ENCODE measurements at regions of chr9 and their contacts with region 1.

Region 1: GRCh38 chr9:75624998-75625397 is 265.5 kb upstream of the PCSK5 start:
- DNase-seq: peak; percentile 28
- H3K4me3 ChIP-seq: no peak overlapping the region
- H3K27ac ChIP-seq: no peak overlapping the region
- H3K4me1 ChIP-seq: no peaks in the 10 kb centered on the region
- H3K27me3 ChIP-seq: no peaks in the 10 kb centered on the region
- CTCF ChIP-seq: no peak
- EP300 ChIP-seq: no peak
- POLR2A ChIP-seq: no peak

Region 2: DNA sequence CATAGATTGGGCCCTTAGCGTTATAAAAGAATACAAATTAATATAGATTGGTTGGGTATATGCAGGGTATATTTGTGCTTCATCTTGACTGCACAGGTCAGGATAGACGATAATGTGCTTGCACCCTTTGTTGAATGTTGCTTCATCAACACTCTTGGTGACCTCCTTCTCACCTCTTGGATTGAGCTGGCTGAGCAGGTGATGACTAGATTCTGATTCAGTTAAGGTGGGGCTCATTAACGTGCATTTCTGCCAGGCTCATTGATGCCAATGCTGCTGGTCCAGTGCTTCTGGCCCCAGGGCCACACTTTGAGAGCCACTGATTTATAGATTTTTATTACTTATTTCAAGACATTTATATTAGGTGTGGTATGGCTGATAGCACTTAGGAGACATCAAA is 293.2 kb after region 1 on chr9:
- in situ Hi-C with region 1: no loop called
- intact Hi-C with region 1: no loop called
- DNase-seq: no peak
- H3K4me3 ChIP-seq: no peak overlapping the region
- H3K27ac ChIP-seq: no peak overlapping the region
- H3K4me1 ChIP-seq: no peaks in the 10 kb centered on the region
- H3K27me3 ChIP-seq: no peaks in the 10 kb centered on the region
- CTCF ChIP-seq: no peak
- EP300 ChIP-seq: no peak
- POLR2A ChIP-seq: no peak

Region 3: GRCh38 chr9:77502568-77502967 is 1877.6 kb after region 1 on chr9:
- in situ Hi-C with region 1: no loop called
- intact Hi-C with region 1: loop called (anchors 5 kb)
- DNase-seq: no peak
- H3K4me3 ChIP-seq: no peak overlapping the region
- H3K27ac ChIP-seq: no peak overlapping the region
- H3K4me1 ChIP-seq: peaks cover 0 to 4% (median 2%) of the 10 kb centered on the region in 4 donors
- H3K27me3 ChIP-seq: no peaks in the 10 kb centered on the region
- CTCF ChIP-seq: no peak
- EP300 ChIP-seq: no peak
- POLR2A ChIP-seq: no peak

Measured in transverse colon (tissue), 4 donors.